ENCODE measurements at regions of chr14 and their contacts with region 1.

Region 1: DNA sequence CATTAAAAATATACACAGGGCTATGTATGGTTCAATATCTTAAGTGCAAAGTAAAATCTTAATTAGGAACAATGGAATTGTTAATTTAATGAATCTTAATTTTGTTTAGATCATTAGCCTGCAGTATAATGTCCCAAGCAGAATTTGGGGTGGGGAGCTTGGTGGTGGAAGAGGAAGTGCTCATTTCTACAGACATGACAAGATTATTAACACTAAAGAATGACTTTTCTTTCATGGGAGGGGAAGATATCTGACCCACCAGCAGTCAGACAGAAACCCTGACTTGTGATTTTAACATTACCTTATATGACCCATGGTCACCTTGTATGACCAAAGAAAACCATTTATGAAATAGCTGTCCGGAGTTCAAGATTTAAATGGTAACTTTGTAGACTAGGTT is 41.3 kb upstream of the HIF1A start:
- DNase-seq: no peak
- H3K4me3 Mint-ChIP-seq: no peak overlapping the region
- H3K27ac Mint-ChIP-seq: no peak overlapping the region
- H3K4me1 Mint-ChIP-seq: peaks cover 46% of the 10 kb centered on the region
- H3K27me3 Mint-ChIP-seq: no peaks in the 10 kb centered on the region

Region 2: GRCh38 chr14:61636779-61637178 is 17.2 kb before region 1 on chr14:
- intact Hi-C with region 1: loop called (anchors 2 kb)
- DNase-seq: no peak
- H3K4me3 Mint-ChIP-seq: no peak overlapping the region
- H3K27ac Mint-ChIP-seq: no peak overlapping the region
- H3K4me1 Mint-ChIP-seq: peaks cover 28% of the 10 kb centered on the region
- H3K27me3 Mint-ChIP-seq: no peaks in the 10 kb centered on the region